Activated CD4-positive, alpha-beta memory T cell treated with anti-CD3 and anti-CD28 coated beads, Interleukin-2, amount 10 ng/mL, durations not matched to agents 7 days and 5 days (primary cell): ENCODE measurements at regions of chr10 and their contacts with region 1.

Region 1: GRCh38 chr10:110067960-110068770 is 60.4 kb downstream of the ADD3 start:
- DNase-seq: peak; percentile 72
- H3K4me3 Mint-ChIP-seq: peak overlapping the region; percentile 60
- H3K27ac Mint-ChIP-seq: peak overlapping the region; percentile 97
- H3K4me1 Mint-ChIP-seq: peaks cover 83% of the 10 kb centered on the region
- H3K27me3 Mint-ChIP-seq: no peaks in the 10 kb centered on the region

Region 2: DNA sequence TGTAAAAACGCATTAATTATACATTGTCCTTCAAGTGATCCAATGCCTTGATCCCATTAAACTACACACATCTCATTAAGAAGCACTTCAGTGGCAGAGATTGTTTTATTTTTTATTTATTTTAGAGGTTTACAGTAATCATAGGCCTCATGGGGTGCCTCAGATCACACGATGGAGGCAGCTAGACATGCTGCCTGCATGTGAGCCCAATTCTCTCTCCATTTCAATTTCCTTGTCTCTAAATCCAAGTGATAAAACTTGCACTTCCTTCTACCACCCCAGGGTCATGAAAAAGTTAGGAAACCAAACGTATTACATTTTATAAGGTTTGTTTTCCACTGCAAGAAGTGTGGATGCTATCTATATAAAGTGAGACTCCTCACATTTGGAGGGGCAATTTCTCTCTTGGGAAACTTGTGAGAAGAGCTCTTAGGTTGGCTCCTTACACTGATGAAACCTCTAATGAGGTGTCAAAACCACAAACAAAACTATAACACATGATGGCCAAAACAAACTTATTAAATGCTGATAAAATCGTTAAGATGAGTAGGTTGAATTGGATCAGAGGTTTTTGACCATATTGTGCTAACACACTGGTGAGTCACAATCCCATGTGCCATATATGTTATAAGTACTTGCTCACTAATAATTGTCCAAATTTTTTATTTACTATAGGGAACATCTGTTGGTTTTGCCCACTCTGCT is 122.5 kb before region 1 on chr10:
- CTCF ChIA-PET with region 1: no interaction called
- POLR2A ChIA-PET with region 1: no interaction called
- DNase-seq: no peak
- H3K4me3 Mint-ChIP-seq: no peak overlapping the region
- H3K27ac Mint-ChIP-seq: no peak overlapping the region
- H3K4me1 Mint-ChIP-seq: peaks cover 3% of the 10 kb centered on the region
- H3K27me3 Mint-ChIP-seq: no peaks in the 10 kb centered on the region

Region 3: GRCh38 chr10:110081911-110082310 is 13.7 kb after region 1 on chr10:
- CTCF ChIA-PET with region 1: interaction called, 15 read pairs
- POLR2A ChIA-PET with region 1: interaction called, 124 read pairs
- DNase-seq: no peak
- H3K4me3 Mint-ChIP-seq: peak overlapping the region; percentile 23
- H3K27ac Mint-ChIP-seq: peak overlapping the region; percentile 85
- H3K4me1 Mint-ChIP-seq: peaks cover 87% of the 10 kb centered on the region
- H3K27me3 Mint-ChIP-seq: no peaks in the 10 kb centered on the region

Region 4: GRCh38 chr10:110088367-110089104 is 20.4 kb after region 1 on chr10:
- CTCF ChIA-PET with region 1: interaction called, 15 read pairs
- POLR2A ChIA-PET with region 1: interaction called, 70 read pairs
- DNase-seq: no peak
- H3K4me3 Mint-ChIP-seq: no peak overlapping the region
- H3K27ac Mint-ChIP-seq: no peak overlapping the region
- H3K4me1 Mint-ChIP-seq: peaks cover 68% of the 10 kb centered on the region
- H3K27me3 Mint-ChIP-seq: no peaks in the 10 kb centered on the region